A549 (cell line): ENCODE measurements at regions of chr6 and their contacts with region 1.

Region 1: GRCh38 chr6:137094411-137095008 is 49.7 kb upstream of the IL20RA start:
- DNase-seq: peak; percentile 46 to 69
- ATAC-seq: peak; percentile 74 to 81
- H3K4me3 ChIP-seq: no peak overlapping the region
- H3K27ac ChIP-seq: peak overlapping the region; percentile 53 to 70; a peak in 4 of 6 replicates
- H3K4me1 ChIP-seq: peaks cover 5% of the 10 kb centered on the region; the same call in 1 of the 3 replicates
- CTCF ChIP-seq: peak; percentile 82
- EP300 ChIP-seq: no peak
- POLR2A ChIP-seq: no peak
- RAD21 ChIP-seq: peak; percentile 84 to 93

Region 2: GRCh38 chr6:137105375-137105774 is 10.9 kb after region 1 on chr6:
- CTCF ChIA-PET with region 1: interaction called, 11 read pairs
- POLR2A ChIA-PET with region 1: no interaction called
- DNase-seq: no peak
- ATAC-seq: no peak
- H3K4me3 ChIP-seq: no peak overlapping the region
- H3K27ac ChIP-seq: no peak overlapping the region
- H3K4me1 ChIP-seq: no peaks in the 10 kb centered on the region
- CTCF ChIP-seq: no peak
- EP300 ChIP-seq: no peak
- POLR2A ChIP-seq: no peak
- RAD21 ChIP-seq: no peak

Region 3: DNA sequence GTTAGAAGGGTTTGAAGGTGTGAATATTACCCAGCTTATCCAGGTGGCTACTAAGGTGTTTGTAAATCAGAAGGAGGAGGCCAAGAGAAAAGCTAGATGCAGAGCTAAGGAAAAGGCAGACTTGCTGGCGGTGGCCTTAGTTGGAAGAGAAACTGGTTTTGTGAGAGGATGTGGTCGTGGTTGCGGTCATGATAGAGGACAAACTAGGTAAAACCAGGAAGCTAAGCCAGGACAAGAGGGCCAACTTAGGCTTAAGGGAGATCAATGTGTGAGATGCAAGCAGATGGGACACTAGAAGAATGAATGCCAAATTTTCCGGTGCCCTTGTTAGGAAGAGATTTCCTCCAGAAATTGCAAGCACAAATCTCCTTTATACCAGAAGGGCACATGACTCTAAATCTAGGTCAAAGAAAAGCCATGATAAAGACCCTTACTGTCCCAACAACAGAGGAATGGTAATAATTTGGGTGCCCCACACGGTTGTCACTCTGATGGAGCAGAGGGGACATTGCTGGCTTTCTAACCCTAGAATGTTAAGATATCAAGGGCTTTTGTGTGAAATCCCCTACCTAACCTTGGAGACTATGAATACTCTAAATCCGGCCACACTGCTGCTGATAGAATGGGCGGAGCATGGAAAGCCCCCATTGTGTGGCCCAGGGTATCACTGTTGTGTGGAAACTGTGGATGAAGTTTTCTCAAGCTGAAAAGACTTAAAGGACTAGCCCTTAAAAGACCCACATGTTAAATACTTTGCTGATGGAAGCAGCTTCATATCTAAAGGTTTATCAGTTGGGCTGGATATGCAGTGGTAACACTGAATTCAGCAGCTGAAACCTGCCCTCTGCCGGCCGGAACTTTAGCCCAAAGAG is 71.1 kb after region 1 on chr6:
- CTCF ChIA-PET with region 1: interaction called, 36 read pairs
- POLR2A ChIA-PET with region 1: no interaction called
- DNase-seq: peak; percentile 15 to 37
- ATAC-seq: peak; percentile 74 to 83; a peak in 4 of 6 replicates
- H3K4me3 ChIP-seq: no peak overlapping the region
- H3K27ac ChIP-seq: 0 out of 6 replicates have a peak overlapping the region, but pooled peaks of 1 of the 2 experiments have one; percentile 49
- H3K4me1 ChIP-seq: peaks cover 16% of the 10 kb centered on the region
- CTCF ChIP-seq: peak; percentile 40
- EP300 ChIP-seq: no peak
- POLR2A ChIP-seq: no peak
- RAD21 ChIP-seq: peak; percentile 50 to 63

Region 4: GRCh38 chr6:137171824-137172705 is 77.6 kb after region 1 on chr6:
- CTCF ChIA-PET with region 1: interaction called, 36 read pairs
- POLR2A ChIA-PET with region 1: no interaction called
- DNase-seq: no peak
- ATAC-seq: no peak
- H3K4me3 ChIP-seq: no peak overlapping the region
- H3K27ac ChIP-seq: no peak overlapping the region
- H3K4me1 ChIP-seq: no peaks in the 10 kb centered on the region
- CTCF ChIP-seq: no peak
- EP300 ChIP-seq: no peak
- POLR2A ChIP-seq: no peak
- RAD21 ChIP-seq: no peak

Region 5: GRCh38 chr6:137313928-137314855 is 219.7 kb after region 1 on chr6:
- CTCF ChIA-PET with region 1: interaction called, 33 read pairs
- POLR2A ChIA-PET with region 1: no interaction called
- DNase-seq: peak; percentile 25 to 66
- ATAC-seq: peak; percentile 70 to 82; a peak in 5 of 6 replicates
- H3K4me3 ChIP-seq: no peak overlapping the region
- H3K27ac ChIP-seq: peak overlapping the region; percentile 6 to 9; a peak in 1 of 6 replicates
- H3K4me1 ChIP-seq: peaks cover 21% of the 10 kb centered on the region
- CTCF ChIP-seq: peak; percentile 74
- EP300 ChIP-seq: no peak
- POLR2A ChIP-seq: no peak
- RAD21 ChIP-seq: peak; percentile 82 to 83

Region 6: GRCh38 chr6:137389150-137389704 is 294.7 kb after region 1 on chr6:
- CTCF ChIA-PET with region 1: no interaction called
- POLR2A ChIA-PET with region 1: no interaction called
- DNase-seq: no peak
- ATAC-seq: no peak
- H3K4me3 ChIP-seq: no peak overlapping the region
- H3K27ac ChIP-seq: no peak overlapping the region
- H3K4me1 ChIP-seq: no peaks in the 10 kb centered on the region
- CTCF ChIP-seq: no peak
- EP300 ChIP-seq: no peak
- POLR2A ChIP-seq: no peak
- RAD21 ChIP-seq: no peak